AG04449 (cell line): ENCODE measurements at regions of chr17 and their contacts with region 1.

Region 1: GRCh38 chr17:933312-934083 is 46.1 kb downstream of the NXN start:
- DNase-seq: peak; percentile 79
- H3K4me3 ChIP-seq: 0 out of 2 replicates have a peak overlapping the region, but pooled peaks have one; percentile 2
- CTCF ChIP-seq: no peak

Region 2: DNA sequence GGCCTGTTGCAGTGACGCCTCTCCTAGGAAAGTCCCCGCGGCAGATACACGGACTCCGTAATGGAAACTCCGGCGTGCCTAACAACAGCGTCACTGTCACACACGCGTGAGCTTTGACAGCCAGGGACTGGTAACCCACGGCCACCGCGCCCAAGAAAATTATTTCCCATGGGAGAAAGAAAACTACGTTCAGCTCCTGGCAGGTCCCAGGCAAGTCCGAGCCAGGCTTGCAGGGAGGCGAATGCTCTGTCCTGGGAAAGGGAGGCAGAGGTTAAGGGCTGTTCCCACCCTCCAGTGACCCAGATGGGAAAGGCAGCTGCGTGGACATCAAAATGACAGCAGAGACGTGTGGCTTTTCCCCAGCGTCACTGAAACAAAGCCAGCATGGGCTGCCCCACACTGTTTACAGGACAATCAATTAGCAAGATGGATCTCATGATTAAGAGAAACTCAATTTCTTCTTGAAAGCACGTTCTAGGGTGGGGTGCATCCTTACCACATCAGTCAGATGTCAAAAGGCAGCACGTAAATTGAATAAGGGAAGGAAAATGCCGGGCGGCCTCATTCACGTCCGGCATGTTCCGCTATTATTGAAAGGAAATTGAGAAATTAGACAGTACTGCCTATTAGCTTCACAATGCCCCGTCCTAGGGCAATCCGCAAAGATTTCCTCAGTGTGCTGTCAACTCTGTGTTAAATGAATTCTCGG is 36.4 kb before region 1 on chr17:
- CTCF ChIA-PET with region 1: no interaction called
- POLR2A ChIA-PET with region 1: no interaction called
- DNase-seq: no peak
- H3K4me3 ChIP-seq: no peak overlapping the region
- CTCF ChIP-seq: no peak

Region 3: DNA sequence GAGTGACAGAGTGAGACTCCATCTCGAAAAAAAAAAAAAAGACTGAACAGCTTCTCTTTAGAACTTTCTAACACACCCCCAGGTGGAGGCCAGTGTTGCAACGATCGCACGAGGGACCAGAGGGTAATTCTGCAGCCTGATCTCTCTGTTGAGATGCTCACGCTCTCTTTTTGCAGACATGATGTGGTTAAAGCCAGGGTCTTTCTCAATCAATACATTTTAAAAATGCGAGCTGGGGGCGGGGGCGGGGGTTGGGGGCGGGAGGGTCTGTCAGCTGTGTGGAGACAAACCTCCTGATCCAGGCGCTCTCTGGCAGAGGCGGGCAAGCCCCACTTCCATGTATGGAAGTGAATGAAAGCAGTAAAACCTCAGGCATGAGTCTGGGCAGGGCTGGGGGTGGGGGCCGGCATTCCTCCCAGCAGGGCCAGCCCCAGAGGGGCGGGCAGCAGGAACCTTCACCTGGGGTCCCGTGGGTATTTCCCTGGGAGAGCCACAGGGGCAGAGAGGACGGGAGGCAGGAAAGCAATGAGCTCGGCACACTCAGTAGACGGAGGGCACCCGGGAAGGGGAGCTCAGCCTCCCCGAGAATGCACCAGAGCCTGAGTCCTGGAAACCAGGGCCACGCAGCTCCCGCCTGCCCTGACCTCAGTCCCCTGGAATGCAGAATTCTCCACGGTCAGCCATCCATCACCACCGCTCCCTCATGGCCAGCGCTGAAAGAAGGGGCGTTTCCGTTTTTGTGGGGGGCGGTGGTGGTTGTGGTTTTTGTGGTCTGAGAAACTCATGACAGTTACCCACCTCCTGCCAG is 18.0 kb after region 1 on chr17:
- CTCF ChIA-PET with region 1: interaction called, 8 read pairs
- POLR2A ChIA-PET with region 1: interaction called, 15 read pairs
- DNase-seq: no peak
- H3K4me3 ChIP-seq: peak overlapping the region; percentile 29; the same call in 1 of the 2 replicates
- CTCF ChIP-seq: no peak

Region 4: DNA sequence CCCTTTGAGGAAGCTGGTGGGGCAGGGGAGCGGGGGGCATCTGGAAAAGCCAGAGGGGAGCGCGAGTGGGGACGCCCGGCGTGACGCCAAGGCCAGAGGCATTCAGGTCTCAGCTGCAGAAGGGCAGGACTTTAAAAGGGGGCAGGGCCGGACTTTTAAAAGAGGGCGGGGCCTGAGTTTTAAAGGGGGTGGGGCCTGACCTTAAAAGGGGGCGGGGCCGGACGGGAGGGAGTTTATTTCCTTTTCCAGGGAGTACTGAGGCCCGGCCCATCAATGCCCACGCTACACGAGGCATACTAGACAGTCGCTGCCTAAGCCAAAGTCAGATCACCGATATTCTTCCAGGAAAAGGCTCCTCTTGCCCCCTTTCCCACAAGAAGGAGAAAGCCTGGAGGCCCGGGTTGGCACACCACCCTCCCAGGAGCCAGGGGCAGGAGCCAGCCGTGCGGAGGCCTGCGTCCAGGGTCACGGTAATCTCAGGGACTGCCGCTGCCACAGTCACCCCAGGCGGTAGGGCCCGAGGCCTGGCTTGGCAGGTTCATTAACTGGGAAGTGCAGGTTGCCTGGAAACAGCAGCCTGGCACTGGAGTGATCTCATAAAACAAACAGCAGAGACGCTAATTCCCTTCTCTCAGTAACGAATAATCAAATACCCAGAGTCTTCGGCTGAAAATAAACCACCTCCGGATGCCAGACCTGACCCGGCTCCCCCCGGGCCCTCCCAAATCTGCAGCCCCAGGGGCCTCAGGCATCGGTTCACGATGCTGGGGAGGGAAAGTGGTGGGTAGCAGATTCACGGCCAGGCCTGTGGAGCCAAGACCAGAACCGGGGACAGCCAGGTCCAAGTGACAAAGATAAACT is 154.1 kb after region 1 on chr17:
- CTCF ChIA-PET with region 1: no interaction called
- POLR2A ChIA-PET with region 1: no interaction called
- DNase-seq: no peak
- H3K4me3 ChIP-seq: no peak overlapping the region
- CTCF ChIP-seq: no peak

Region 5: DNA sequence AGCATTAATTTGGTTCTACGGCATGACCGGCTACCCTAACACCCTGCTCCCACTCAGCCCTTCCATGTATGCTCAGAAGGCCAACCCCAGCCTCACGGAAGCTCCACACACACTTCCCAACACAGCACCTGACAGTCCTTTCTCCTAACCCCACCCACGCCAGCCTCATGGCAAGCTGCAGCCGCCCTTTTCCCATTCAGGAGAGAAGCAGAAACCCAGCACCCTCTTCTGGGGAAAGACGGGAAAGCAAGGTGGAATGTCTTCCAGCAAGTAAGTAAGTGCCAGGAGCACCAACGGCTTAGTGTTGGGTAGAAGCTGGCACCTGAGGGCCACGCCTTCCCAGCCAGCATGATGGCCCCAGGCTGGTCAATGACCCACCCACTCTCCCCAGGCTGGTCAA is 214.2 kb after region 1 on chr17:
- CTCF ChIA-PET with region 1: no interaction called
- POLR2A ChIA-PET with region 1: no interaction called
- DNase-seq: no peak
- H3K4me3 ChIP-seq: no peak overlapping the region
- CTCF ChIP-seq: peak; percentile 49